Transverse colon (tissue), 4 donors: ENCODE measurements at regions of chr3 and their contacts with region 1.

Region 1: GRCh38 chr3:168847291-168847883 is 751.7 kb upstream of the GOLIM4 start:
- DNase-seq: no peak
- H3K4me3 ChIP-seq: no peak overlapping the region
- H3K27ac ChIP-seq: no peak overlapping the region
- H3K4me1 ChIP-seq: peaks cover 0 to 3% (median 0%) of the 10 kb centered on the region in 4 donors
- H3K27me3 ChIP-seq: peaks cover 22% of the 10 kb centered on the region
- CTCF ChIP-seq: peak; percentile 52 to 61 (median 56)
- EP300 ChIP-seq: no peak
- POLR2A ChIP-seq: no peak

Region 2: DNA sequence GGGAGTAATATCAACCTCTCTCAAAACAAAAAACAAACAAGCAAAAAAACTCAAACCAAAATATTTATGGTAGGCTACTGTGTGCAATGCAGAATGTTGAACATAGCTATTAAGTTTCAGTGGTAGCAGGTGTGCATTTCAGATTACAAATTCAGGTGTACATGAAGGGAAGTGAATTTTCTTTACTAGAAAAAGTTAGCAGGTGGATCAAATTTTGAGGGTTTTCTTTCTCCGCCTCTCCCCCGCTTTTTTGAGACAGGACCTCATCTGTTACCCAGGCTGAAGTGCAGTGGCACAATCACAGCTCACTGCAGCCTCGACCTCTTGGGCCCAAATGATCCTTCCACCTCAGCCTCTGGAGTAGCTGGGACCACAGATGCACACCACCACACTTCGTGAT is 641.9 kb before region 1 on chr3:
- in situ Hi-C with region 1: loop called (anchors 10 kb)
- intact Hi-C with region 1: loop called (anchors 10 kb)
- DNase-seq: no peak
- H3K4me3 ChIP-seq: no peak overlapping the region
- H3K27ac ChIP-seq: no peak overlapping the region
- H3K4me1 ChIP-seq: no peaks in the 10 kb centered on the region
- H3K27me3 ChIP-seq: no peaks in the 10 kb centered on the region
- CTCF ChIP-seq: no peak
- EP300 ChIP-seq: no peak
- POLR2A ChIP-seq: no peak

Region 3: GRCh38 chr3:168213920-168214319 is 633.5 kb before region 1 on chr3:
- in situ Hi-C with region 1: loop called (anchors 10 kb)
- intact Hi-C with region 1: loop called (anchors 10 kb)
- DNase-seq: no peak
- H3K4me3 ChIP-seq: no peak overlapping the region
- H3K27ac ChIP-seq: no peak overlapping the region
- H3K4me1 ChIP-seq: peaks cover 0 to 6% (median 0%) of the 10 kb centered on the region in 4 donors
- H3K27me3 ChIP-seq: no peaks in the 10 kb centered on the region
- CTCF ChIP-seq: no peak
- EP300 ChIP-seq: no peak
- POLR2A ChIP-seq: no peak

Region 4: DNA sequence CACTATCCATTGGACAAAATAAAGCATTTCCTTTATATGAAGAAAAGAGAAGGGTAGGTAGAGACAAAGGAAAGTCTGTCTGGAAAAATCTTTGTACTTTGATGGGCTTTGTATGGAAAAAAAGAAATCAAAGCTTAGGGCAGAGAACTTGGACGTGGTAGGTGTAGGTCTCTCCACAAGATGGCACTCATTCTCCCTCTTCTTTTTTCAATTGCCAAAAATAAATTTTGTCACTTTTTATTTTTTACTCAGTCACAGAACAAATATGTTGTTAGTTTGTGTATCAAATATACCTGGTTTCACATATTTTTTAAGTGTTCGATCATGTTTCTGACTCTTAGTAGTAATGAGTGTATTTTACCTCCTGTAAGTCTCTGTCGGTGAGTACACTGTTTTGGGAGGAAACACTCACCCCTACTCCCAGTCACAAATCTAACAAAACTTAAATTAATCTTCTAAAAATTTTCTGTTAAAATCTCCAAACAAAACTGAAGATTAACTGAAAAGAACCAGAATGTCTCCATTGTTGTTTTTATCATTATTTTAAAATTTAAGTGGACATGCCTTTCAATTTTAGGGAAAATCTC is 335.9 kb before region 1 on chr3:
- in situ Hi-C with region 1: loop called in 1 of 4 experiments (anchors 25 kb)
- intact Hi-C with region 1: no loop called
- DNase-seq: no peak
- H3K4me3 ChIP-seq: no peak overlapping the region
- H3K27ac ChIP-seq: no peak overlapping the region
- H3K4me1 ChIP-seq: no peaks in the 10 kb centered on the region
- H3K27me3 ChIP-seq: no peaks in the 10 kb centered on the region
- CTCF ChIP-seq: peak in 4 of 5 experiments; percentile 14 to 38 (median 24)
- EP300 ChIP-seq: no peak
- POLR2A ChIP-seq: no peak

Region 5: DNA sequence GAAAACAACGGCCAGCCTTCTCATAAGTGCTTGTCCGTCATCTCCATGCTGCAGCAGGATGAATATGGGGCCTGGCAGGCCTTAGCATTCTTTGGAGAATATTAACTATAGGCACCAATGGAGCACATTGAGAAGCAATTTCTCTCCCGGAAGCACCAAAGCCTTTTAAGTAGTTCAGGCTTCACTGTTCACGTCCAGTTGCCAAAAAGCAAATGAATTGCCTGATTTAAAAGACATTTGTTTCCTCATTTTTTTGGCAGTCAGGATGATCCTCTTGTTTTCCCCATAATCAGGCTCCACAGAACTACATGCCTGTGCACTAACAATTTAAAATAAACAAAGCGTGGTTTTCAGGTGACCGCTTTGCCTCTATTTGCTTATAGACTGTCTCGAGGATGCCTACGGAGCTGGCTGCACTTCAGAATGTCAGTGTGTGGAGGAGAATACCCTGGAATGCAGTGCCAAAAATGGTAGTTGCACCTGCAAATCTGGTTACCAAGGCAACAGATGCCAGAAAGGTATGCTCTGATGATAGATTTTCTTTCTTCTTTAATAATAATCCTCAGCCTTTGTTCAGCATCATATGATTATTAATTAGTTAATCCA is 26.5 kb before region 1 on chr3:
- in situ Hi-C with region 1: no loop called
- intact Hi-C with region 1: no loop called
- DNase-seq: no peak
- H3K4me3 ChIP-seq: no peak overlapping the region
- H3K27ac ChIP-seq: no peak overlapping the region
- H3K4me1 ChIP-seq: no peaks in the 10 kb centered on the region
- H3K27me3 ChIP-seq: no peaks in the 10 kb centered on the region
- CTCF ChIP-seq: no peak
- EP300 ChIP-seq: no peak
- POLR2A ChIP-seq: no peak

Region 6: DNA sequence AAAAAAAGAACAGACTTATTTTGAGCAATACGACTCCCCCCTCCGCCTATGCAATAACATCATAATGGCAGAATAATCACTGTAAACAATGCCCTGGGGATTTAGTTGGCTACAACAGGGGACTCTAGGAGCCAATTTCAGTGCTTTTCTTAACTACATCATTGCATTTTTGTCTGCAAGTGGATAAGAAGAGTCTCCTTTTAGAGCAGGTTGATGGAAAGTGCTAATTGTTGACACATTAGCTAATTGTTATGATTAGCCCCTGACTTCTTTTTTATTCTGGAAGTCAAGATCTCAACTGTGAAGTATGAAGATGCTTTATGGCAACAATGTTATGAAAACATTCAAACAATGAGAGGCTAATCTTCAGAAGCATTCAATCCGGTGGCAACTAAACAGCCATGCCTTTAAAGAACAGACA is 695.0 kb after region 1 on chr3:
- in situ Hi-C with region 1: no loop called
- intact Hi-C with region 1: no loop called
- DNase-seq: no peak
- H3K4me3 ChIP-seq: no peak overlapping the region
- H3K27ac ChIP-seq: no peak overlapping the region
- H3K4me1 ChIP-seq: no peaks in the 10 kb centered on the region
- H3K27me3 ChIP-seq: no peaks in the 10 kb centered on the region
- CTCF ChIP-seq: no peak
- EP300 ChIP-seq: no peak
- POLR2A ChIP-seq: no peak